Endothelial cell of umbilical vein (primary cell): ENCODE measurements at regions of chr3 and their contacts with region 1.

Region 1: DNA sequence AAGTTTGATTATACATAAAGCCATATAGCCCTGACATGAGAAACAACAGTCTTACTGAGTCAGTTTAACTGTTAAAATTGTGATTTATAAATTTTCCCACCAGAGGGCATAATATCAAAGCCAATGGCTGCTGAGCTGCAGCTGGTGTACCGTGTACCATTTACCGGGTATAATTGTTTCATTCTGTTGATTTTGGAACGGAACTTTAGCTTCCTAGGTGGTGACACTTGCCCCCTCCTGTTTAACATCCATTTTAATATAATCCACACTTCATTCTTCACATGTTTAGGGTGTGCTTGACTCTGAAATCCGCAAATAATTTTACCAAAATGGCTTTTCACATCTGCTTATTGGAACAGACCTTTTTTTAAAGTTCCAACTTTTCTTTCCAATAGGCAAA is 72.8 kb downstream of the SLC9A9 start:
- DNase-seq: peak; percentile 57
- H3K4me3 ChIP-seq: no peak overlapping the region
- H3K27ac ChIP-seq: no peak overlapping the region
- H3K4me1 ChIP-seq: peaks cover 3% of the 10 kb centered on the region
- H3K27me3 ChIP-seq: no peaks in the 10 kb centered on the region
- CTCF ChIP-seq: peak; percentile 32 to 37
- POLR2A ChIP-seq: no peak

Region 2: GRCh38 chr3:143658861-143659260 is 116.6 kb before region 1 on chr3:
- CTCF ChIA-PET with region 1: no interaction called
- POLR2A ChIA-PET with region 1: no interaction called
- dilution Hi-C with region 1: no loop called
- intact Hi-C with region 1: no loop called
- DNase-seq: no peak
- H3K4me3 ChIP-seq: no peak overlapping the region
- H3K27ac ChIP-seq: no peak overlapping the region
- H3K4me1 ChIP-seq: no peaks in the 10 kb centered on the region
- H3K27me3 ChIP-seq: peaks cover 0 to 2% of the 10 kb centered on the region in 2 experiments
- CTCF ChIP-seq: no peak
- POLR2A ChIP-seq: no peak

Region 3: GRCh38 chr3:143885780-143886427 is 110.4 kb after region 1 on chr3:
- CTCF ChIA-PET with region 1: interaction called, 6 read pairs
- POLR2A ChIA-PET with region 1: no interaction called
- dilution Hi-C with region 1: no loop called
- intact Hi-C with region 1: loop called (anchors 5 kb)
- DNase-seq: peak; percentile 36
- H3K4me3 ChIP-seq: no peak overlapping the region
- H3K27ac ChIP-seq: no peak overlapping the region
- H3K4me1 ChIP-seq: peaks cover 9% of the 10 kb centered on the region
- H3K27me3 ChIP-seq: no peaks in the 10 kb centered on the region
- CTCF ChIP-seq: peak; percentile 58 to 60
- POLR2A ChIP-seq: no peak

Region 4: DNA sequence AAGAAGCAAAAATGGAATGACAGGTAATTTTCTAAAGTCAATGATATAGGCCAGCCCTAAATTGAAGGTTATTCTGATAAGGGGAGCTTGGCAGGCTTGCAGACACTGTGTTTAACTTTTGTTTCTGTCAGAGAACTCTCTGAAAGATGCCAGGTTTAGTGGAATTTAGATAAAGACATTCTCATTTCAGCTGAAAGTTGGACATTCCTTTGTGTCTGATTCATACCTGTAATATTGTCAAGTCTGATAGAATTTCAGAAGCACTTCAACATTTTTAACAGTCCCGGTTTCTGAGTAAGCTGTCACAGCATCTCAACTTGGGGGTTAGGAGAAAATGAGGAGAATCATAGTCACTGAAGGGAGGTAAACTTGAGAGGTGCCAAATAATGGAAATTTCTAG is 280.1 kb after region 1 on chr3:
- CTCF ChIA-PET with region 1: no interaction called
- POLR2A ChIA-PET with region 1: no interaction called
- dilution Hi-C with region 1: no loop called
- intact Hi-C with region 1: no loop called
- DNase-seq: no peak
- H3K4me3 ChIP-seq: no peak overlapping the region
- H3K27ac ChIP-seq: no peak overlapping the region
- H3K4me1 ChIP-seq: no peaks in the 10 kb centered on the region
- H3K27me3 ChIP-seq: no peaks in the 10 kb centered on the region
- CTCF ChIP-seq: no peak
- POLR2A ChIP-seq: no peak